ENCODE measurements at regions of chr20 and their contacts with region 1.

Region 1: GRCh38 chr20:62616728-62617621 is 25.3 kb upstream of the SLCO4A1 start:
- DNase-seq: peak; percentile 44 to 82 (median 68)
- ATAC-seq: peak; percentile 86
- H3K4me3 ChIP-seq: no peak overlapping the region
- H3K4me3 Mint-ChIP-seq: no peak overlapping the region
- H3K27ac ChIP-seq: no peak overlapping the region
- H3K27ac Mint-ChIP-seq: peak overlapping the region; percentile 41
- H3K4me1 ChIP-seq: peaks cover 26% of the 10 kb centered on the region
- H3K4me1 Mint-ChIP-seq: peaks cover 22% of the 10 kb centered on the region
- H3K27me3 ChIP-seq: no peaks in the 10 kb centered on the region
- H3K27me3 Mint-ChIP-seq: no peaks in the 10 kb centered on the region
- CTCF ChIP-seq: peak; percentile 82

Region 2: DNA sequence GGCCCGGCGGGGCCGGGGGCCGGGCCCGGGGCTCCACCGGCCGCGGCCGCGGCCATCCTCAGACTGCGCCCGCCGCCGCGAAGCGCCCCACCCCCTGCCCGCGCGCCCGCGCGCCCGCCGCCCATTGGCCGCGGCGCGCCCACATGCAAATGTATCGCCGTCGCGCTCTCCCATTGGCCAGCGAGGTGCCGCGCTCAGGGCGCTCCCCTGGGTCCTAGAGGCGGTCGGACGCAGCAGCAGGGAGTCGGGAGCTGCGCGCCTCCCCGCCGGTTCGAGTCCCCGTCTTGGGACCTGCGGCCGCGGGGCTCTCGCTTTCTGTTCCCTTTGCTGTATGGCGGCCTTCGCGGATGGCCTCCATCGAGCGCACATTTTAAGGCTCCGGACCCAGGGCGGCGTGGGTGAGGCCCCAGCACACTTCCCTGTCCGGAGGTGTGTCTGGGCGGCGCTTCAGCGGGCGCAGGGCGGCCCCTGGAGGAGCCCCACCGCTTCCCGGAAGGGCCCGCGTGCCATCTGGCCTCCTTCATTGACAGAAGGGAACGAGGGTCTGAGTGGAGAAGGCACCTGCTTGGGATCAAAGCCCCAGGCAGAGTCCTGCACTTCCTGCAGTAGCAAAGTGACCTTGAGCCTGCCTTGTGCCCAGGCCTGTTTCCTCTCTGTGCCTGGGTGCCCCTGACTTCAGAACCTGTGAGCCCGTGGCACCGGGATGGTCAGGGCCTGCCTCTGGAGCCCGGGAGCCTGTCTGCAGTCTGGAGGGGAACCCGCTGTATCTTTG is 209.6 kb before region 1 on chr20 and contains the start of gene CABLES2:
- CTCF ChIA-PET with region 1: no interaction called
- POLR2A ChIA-PET with region 1: no interaction called
- intact Hi-C with region 1: loop called in 1 of 2 experiments (anchors 5 kb)
- DNase-seq: peak; percentile 79 to 96 (median 90)
- ATAC-seq: peak; percentile 96
- H3K4me3 ChIP-seq: peak within 1 kb of the TSS; percentile 65 to 72
- H3K4me3 Mint-ChIP-seq: peak within 1 kb of the TSS; percentile 74
- H3K27ac ChIP-seq: peak within 1 kb of the TSS; percentile 33 to 54
- H3K27ac Mint-ChIP-seq: peak within 1 kb of the TSS; percentile 18
- H3K4me1 ChIP-seq: peaks cover 22% of the 10 kb centered on the region
- H3K4me1 Mint-ChIP-seq: peaks cover 26% of the 10 kb centered on the region
- H3K27me3 ChIP-seq: no peaks in the 10 kb centered on the region
- H3K27me3 Mint-ChIP-seq: no peaks in the 10 kb centered on the region
- CTCF ChIP-seq: no peak
- total RNA-seq, gene CABLES2: 4.5 to 5.1 TPM

Region 3: DNA sequence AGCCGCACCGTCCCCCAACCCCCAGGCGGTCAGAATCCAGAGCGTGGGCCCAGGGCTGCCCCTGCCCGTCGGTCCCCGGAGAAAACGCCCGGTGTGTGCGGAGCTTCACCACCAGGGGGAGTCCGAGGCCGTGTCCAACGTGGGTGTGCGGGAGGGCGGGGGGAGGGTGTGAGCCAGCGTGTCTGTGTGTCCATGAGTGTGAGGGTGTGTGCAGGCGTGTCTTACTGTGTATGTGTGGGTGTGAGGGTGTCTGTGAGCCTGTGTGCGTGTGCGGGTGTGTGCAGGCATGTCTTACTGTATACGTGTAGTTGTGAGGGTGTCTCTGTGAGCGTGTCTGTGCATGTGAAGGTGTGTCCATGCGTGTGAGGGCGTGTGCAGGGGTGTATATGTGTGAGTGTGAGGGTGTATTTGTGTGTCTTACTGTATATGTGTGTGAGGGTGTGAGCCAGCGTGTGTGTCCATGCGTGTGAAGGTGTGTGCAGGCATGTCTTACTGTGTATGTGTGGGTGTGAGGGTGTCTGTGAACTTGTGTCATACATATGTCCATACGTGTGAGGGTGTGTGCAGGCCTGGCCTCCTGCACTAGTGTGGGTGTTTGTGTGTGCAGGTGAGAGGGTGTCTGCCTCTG is 116.6 kb before region 1 on chr20:
- CTCF ChIA-PET with region 1: interaction called, 26 read pairs
- POLR2A ChIA-PET with region 1: interaction called, 4 read pairs
- intact Hi-C with region 1: loop called in 1 of 2 experiments (anchors 1 kb)
- DNase-seq: peak; percentile 62 to 88 (median 82)
- ATAC-seq: peak; percentile 64
- H3K4me3 ChIP-seq: no peak overlapping the region
- H3K4me3 Mint-ChIP-seq: no peak overlapping the region
- H3K27ac ChIP-seq: no peak overlapping the region
- H3K27ac Mint-ChIP-seq: no peak overlapping the region
- H3K4me1 ChIP-seq: peaks cover 7% of the 10 kb centered on the region
- H3K4me1 Mint-ChIP-seq: peaks cover 11% of the 10 kb centered on the region
- H3K27me3 ChIP-seq: no peaks in the 10 kb centered on the region
- H3K27me3 Mint-ChIP-seq: peaks cover 2% of the 10 kb centered on the region
- CTCF ChIP-seq: peak; percentile 76

Region 4: DNA sequence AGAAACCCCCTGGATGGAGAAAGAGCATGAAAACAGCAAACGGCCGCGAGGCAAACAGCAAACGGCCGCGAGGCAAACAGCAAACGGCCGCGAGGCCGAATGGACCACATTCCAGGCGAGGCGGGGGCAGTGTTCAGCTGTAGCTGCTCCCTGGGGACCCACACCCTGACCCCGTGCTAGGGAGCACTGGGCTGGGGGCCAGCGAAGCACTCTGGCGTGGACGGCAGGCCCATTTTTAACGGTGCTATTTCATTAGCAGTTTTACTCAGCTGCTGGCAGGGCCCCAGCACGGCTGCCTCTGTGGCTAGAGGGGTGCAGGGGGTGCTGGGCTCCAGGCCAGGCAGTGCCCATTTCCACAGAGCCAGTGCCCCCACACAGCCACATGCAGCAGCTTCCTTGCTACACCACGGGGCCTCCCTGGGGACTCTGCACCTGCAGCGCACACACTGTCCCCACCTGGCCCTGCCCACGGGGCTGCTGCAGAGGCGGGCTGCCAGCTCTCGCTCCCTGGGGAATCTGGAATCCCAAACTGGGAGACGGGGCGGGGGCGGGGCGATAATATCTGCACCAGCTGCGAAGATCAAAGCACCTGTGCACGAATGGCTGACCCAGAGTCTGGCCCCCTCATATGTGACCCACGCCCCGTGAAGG is 10.3 kb before region 1 on chr20:
- CTCF ChIA-PET with region 1: interaction called, 15 read pairs
- POLR2A ChIA-PET with region 1: interaction called, 3 read pairs
- intact Hi-C with region 1: no loop called
- DNase-seq: no peak
- ATAC-seq: no peak
- H3K4me3 ChIP-seq: no peak overlapping the region
- H3K4me3 Mint-ChIP-seq: no peak overlapping the region
- H3K27ac ChIP-seq: no peak overlapping the region
- H3K27ac Mint-ChIP-seq: no peak overlapping the region
- H3K4me1 ChIP-seq: peaks cover 26% of the 10 kb centered on the region
- H3K4me1 Mint-ChIP-seq: peaks cover 20% of the 10 kb centered on the region
- H3K27me3 ChIP-seq: no peaks in the 10 kb centered on the region
- H3K27me3 Mint-ChIP-seq: peaks cover 5% of the 10 kb centered on the region
- CTCF ChIP-seq: no peak

Measured in CD8-positive, alpha-beta T cell (primary cell).